ENCODE measurements at regions of chr1 and their contacts with region 1.

Region 1: GRCh38 chr1:199859491-199859933 is 168.0 kb upstream of the NR5A2 start:
- DNase-seq: peak; percentile 97
- H3K4me3 ChIP-seq: no peak overlapping the region
- H3K27ac ChIP-seq: peak overlapping the region; percentile 31
- H3K4me1 ChIP-seq: peaks cover 42% of the 10 kb centered on the region
- H3K27me3 ChIP-seq: no peaks in the 10 kb centered on the region
- CTCF ChIP-seq: no peak
- POLR2A ChIP-seq: no peak

Region 2: DNA sequence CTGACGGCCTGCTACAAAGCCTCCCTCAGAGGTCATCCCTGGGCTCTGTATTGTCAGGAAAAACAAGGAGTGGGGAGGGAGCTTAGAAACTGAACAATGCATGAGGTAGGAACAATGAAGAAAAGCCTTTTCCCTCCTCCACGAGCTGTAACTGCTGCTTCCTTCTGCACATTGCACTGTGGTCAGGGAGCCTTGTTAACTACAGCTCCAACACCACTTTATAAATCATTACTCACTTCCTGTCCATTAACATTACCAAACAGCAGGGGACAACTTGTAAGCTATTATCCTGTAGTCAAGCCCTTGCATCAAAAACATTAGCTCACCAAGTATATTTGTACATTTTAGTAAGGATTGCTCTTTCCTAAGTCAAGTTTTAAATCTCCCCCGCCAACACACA is 168.0 kb before region 1 on chr1:
- CTCF ChIA-PET with region 1: interaction called, 6 read pairs
- POLR2A ChIA-PET with region 1: interaction called, 6 read pairs
- dilution Hi-C with region 1: no loop called
- intact Hi-C with region 1: loop called (anchors 1 kb)
- DNase-seq: peak; percentile 98
- H3K4me3 ChIP-seq: no peak overlapping the region
- H3K27ac ChIP-seq: peak overlapping the region; percentile 89
- H3K4me1 ChIP-seq: peaks cover 49% of the 10 kb centered on the region
- H3K27me3 ChIP-seq: no peaks in the 10 kb centered on the region
- CTCF ChIP-seq: peak in 1 of 2 donors; percentile 5
- POLR2A ChIP-seq: peak; percentile 81

Region 3: GRCh38 chr1:199742547-199742946 is 117.0 kb before region 1 on chr1:
- CTCF ChIA-PET with region 1: no interaction called
- POLR2A ChIA-PET with region 1: no interaction called
- dilution Hi-C with region 1: no loop called
- intact Hi-C with region 1: loop called (anchors 2 kb)
- DNase-seq: peak; percentile 86
- H3K4me3 ChIP-seq: no peak overlapping the region
- H3K27ac ChIP-seq: peak overlapping the region; percentile 81
- H3K4me1 ChIP-seq: peaks cover 16% of the 10 kb centered on the region
- H3K27me3 ChIP-seq: no peaks in the 10 kb centered on the region
- CTCF ChIP-seq: no peak
- POLR2A ChIP-seq: no peak

Region 4: GRCh38 chr1:200038981-200039848 is 179.7 kb after region 1 on chr1:
- CTCF ChIA-PET with region 1: no interaction called
- POLR2A ChIA-PET with region 1: no interaction called
- dilution Hi-C with region 1: no loop called
- intact Hi-C with region 1: loop called (anchors 2 kb)
- DNase-seq: peak; percentile 65
- H3K4me3 ChIP-seq: peak overlapping the region; percentile 11 to 75 (median 59)
- H3K27ac ChIP-seq: no peak overlapping the region
- H3K4me1 ChIP-seq: peaks cover 22% of the 10 kb centered on the region
- H3K27me3 ChIP-seq: peaks cover 15 to 97% of the 10 kb centered on the region in 2 experiments
- CTCF ChIP-seq: no peak
- POLR2A ChIP-seq: no peak

Region 5: DNA sequence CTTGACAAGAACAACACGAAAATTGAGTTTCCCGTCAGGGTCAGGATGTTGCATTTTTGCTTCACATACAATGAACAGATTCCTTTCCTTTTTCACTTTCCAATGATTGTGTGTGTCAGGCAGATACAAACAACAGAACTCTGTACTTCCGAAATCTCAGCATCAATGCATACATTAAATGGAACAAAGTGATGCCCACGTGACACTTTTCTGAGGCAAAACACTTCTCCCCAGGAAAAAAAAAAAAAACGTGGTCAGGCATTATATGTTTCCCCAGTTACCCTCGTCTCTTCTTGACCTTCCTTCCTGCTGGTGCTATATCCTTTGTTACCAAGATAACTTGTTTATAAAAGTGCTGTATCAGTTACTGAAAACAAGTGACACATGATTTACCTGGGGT is 368.6 kb after region 1 on chr1:
- CTCF ChIA-PET with region 1: no interaction called
- POLR2A ChIA-PET with region 1: no interaction called
- dilution Hi-C with region 1: no loop called
- intact Hi-C with region 1: loop called (anchors 2 kb)
- DNase-seq: peak; percentile 67
- H3K4me3 ChIP-seq: peak overlapping the region in 1 of 3 experiments; percentile 21
- H3K27ac ChIP-seq: no peak overlapping the region
- H3K4me1 ChIP-seq: peaks cover 28% of the 10 kb centered on the region
- H3K27me3 ChIP-seq: no peaks in the 10 kb centered on the region
- CTCF ChIP-seq: no peak
- POLR2A ChIP-seq: no peak

Region 6: DNA sequence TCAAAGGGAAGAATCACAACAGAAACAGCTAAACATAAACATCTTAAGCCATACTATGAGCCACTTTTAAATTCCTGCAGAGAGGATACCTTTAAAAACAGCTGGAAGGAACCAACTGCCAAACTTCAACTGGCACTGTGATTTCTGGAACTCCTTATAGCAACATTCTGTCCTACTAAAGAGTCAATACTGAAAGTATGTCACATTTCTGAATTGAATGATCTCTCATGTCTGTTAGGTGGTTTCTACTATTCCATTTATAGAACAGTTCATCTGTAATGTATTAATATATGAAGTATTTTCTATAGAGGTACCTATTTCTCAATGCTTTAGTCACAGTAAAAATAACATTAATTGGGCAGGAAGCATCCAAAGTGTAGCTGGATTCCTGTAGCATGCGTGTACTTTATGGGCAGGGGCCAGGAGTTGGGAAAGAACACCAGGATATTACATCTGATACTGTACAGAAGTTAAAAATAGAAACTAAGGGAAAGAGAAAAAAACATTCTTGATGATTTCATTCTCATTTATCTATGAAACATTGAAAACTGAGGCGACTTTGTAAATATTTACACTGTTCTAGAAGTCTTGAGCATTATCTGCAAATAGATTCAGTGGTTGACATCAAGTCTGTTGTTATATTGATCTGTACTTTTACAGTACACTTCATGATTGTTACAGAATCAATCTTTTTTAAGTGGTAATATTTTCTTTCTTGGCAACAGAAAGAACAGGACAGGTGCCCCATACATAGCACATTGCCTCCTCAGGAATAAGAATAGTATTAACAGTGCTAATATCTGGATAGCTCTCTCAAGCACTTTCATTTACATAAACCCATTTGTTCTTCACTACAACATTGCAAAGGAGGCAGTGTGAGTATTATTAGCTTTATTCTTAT is 556.4 kb after region 1 on chr1:
- CTCF ChIA-PET with region 1: no interaction called
- POLR2A ChIA-PET with region 1: no interaction called
- dilution Hi-C with region 1: no loop called
- intact Hi-C with region 1: loop called (anchors 1 kb)
- DNase-seq: peak; percentile 94
- H3K4me3 ChIP-seq: peak overlapping the region in 1 of 3 experiments; percentile 55
- H3K27ac ChIP-seq: peak overlapping the region; percentile 99
- H3K4me1 ChIP-seq: peaks cover 24% of the 10 kb centered on the region
- H3K27me3 ChIP-seq: no peaks in the 10 kb centered on the region
- CTCF ChIP-seq: no peak
- POLR2A ChIP-seq: no peak